Aorta (tissue), 5 donors: ENCODE measurements at regions of chr2 and their contacts with region 1.

Region 1: DNA sequence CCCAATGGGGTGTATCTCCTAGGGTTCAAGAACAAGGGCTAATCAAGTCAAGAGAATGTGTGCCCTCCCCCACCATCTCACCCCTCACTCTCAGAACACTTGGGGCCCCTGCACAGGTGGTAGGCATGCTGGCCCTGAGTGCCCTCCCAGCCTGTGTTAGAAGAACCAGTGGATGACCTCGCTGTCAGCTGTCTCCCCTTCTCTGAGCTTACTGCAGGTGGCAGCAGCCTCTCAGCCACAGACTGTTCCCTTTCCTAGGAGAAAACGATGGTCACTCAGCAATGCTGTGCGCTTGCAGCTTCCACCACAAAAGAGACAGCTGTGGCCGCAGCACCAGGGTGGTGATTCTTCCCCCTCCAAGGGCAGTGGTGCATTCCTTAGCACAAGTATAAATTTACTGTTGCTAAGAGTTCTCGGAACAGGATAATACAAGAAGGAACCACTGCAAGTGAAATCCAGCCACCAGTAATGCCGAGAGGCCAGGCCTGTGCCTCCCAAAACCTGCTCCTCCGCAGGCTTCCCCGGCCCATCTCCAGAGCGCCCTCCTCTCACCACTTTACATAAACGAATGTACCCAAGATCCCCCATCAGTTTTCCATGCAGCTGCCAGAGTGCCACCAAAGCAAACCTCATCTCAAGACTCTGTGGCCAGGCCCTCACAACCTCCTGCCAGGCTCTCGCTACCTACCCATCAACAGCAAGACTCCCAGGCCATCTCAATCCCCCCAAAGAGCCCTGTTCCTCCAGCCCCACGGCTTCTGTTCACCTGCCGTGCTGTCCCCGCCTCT is 935 bp upstream of the RAMP1 start:
- DNase-seq: peak; percentile 81 to 87
- ATAC-seq: peak; percentile 83
- H3K4me3 ChIP-seq: no peak overlapping the region
- H3K27ac ChIP-seq: peak overlapping the region in 1 of 2 donors; percentile 72
- H3K4me1 ChIP-seq: peaks cover 0 to 3% of the 10 kb centered on the region in 2 donors
- H3K27me3 ChIP-seq: no peaks in the 10 kb centered on the region

Region 2: DNA sequence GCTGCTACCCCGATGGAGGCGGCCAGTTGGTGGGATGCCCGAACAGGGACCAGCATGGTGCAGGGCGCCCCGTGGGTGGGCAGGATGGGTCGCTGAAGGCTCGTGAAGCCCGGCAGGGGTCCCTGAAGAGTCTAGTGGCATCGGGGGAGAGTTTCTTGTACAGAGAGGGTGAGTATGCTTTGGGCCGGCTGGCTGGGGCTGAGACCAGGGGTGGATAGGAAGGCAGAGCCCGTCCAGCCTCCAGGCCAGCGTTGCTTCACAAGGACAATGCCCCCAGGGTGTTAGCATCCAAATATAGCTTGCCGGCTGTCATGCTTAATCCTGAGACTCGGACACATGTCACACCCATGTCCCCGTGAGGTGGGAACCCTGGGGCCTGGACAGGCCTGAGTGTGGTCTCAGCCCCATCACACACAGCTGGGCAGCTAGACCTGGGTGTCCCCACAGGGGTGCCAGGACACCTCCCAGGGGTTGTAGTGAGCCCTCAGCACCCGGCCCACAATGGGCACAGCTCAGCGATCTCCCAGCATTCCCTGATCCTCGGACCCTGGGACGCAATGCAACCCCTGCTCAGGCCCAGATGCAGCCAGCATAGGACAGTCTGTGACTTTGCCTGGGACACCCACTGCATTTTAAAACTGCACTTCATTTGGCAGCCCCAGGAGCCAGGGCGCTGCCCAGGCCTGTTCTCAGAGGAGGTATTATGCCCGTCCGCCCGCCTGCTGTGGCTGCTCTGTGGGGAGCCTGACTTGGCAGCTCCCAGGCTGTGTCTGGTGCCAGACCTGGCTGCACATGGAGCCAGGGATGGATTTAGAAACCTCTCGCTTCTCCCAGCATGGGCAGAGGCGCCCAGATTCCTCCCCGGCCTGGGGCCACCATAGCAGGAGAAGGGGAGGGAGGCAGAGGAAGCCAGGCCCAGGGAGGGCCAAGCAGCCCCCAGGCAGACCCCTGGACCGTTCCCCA is 37.3 kb after region 1 on chr2:
- intact Hi-C with region 1: loop called in 1 of 2 experiments (anchors 5 kb)
- DNase-seq: peak; percentile 87 to 89
- ATAC-seq: peak; percentile 89
- H3K4me3 ChIP-seq: no peak overlapping the region
- H3K27ac ChIP-seq: peak overlapping the region; percentile 85 to 95
- H3K4me1 ChIP-seq: peaks cover 0 to 5% of the 10 kb centered on the region in 2 donors
- H3K27me3 ChIP-seq: no peaks in the 10 kb centered on the region

Region 3: DNA sequence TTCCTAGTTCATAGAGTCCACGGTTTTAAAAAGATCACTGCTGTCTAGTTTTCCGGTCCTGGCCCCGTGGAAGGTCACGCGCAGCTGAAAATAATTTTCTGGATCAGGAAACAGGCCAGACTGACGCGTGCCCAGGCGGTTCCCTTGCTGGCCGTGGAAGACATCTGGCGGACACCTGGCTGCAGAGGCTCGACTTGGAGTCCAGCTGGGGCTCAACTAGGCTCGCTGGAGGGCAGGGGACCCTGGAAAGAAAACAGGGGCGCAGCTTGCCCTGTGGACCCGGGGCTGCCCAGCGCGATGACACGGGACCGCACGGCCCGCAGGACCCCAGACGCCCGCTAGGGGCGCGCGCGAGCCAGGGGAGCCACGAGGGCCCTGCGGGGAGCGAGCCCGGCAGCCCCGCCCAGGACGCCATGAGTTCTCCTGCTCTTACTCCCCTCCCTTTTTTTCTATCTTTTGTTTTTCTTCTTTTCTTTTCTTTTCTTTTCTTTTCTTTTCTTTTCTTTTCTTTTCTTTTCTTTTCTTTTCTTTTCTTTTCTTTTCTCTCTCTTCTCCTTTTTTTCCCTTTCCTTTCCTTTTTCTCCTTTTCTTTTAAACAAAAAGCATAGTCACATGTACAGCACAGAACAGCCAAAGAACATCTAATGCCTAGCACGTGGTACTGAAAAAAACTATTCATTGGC is 65.1 kb after region 1 on chr2:
- intact Hi-C with region 1: loop called in 1 of 2 experiments (anchors 1 kb)
- DNase-seq: peak; percentile 89 to 93
- ATAC-seq: peak; percentile 95
- H3K4me3 ChIP-seq: no peak overlapping the region
- H3K27ac ChIP-seq: peak overlapping the region in 1 of 2 donors; percentile 86
- H3K4me1 ChIP-seq: no peaks in the 10 kb centered on the region
- H3K27me3 ChIP-seq: no peaks in the 10 kb centered on the region

Region 4: DNA sequence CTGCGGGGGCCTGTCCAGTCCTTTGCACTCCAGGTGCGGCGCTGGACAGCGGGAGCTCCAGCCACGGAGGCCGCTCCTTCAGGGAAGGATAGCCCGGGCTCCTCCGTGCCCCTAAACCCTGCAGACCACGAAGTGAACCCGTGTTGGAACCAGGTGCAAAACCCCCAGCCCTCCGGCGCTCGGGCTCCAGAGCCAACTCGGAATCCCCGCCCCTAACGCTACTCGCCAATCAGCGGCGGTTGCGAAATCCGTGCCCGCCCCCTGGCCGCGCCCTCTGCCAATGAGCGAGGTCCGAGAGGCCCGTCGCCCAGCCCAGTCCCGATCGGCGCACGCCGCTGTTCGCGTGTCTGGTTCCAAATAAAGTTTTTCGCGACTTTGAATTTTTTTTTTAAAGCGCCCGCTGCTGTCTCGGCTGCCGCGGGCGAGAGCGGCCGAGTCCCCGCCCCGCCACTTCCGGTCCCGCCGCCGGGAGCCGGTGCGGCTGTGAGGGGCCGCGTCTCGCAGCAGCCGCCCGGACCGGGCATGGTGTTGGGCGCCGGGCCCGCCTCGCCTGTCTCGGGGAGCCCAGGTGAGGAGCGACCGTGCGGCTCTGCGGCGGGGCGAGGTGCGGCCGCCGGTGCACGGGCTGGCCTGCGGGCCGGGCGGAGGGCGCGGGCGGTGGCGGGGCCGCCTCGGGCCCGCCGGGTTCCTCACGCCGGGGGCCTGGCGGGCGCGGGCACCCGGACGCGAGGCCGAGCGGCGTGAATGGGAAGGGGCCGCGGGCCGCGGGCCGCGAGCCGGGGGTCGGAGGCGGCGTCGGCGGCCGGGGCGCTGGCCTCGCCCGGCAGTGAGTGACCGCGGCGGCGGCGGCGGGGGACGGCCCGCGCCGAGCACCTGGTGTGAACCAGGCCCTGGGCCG is 108.3 kb after region 1 on chr2 and contains the start of gene UBE2F:
- intact Hi-C with region 1: loop called in 1 of 2 experiments (anchors 2 kb)
- DNase-seq: peak; percentile 99
- ATAC-seq: peak; percentile 98
- H3K4me3 ChIP-seq: peak within 1 kb of the TSS; percentile 94
- H3K27ac ChIP-seq: peak within 1 kb of the TSS in 1 of 2 donors; percentile 6
- H3K4me1 ChIP-seq: peaks cover 0 to 2% of the 10 kb centered on the region in 2 donors
- H3K27me3 ChIP-seq: no peaks in the 10 kb centered on the region
- total RNA-seq, gene UBE2F: 42.5 to 44.7 TPM

Region 5: DNA sequence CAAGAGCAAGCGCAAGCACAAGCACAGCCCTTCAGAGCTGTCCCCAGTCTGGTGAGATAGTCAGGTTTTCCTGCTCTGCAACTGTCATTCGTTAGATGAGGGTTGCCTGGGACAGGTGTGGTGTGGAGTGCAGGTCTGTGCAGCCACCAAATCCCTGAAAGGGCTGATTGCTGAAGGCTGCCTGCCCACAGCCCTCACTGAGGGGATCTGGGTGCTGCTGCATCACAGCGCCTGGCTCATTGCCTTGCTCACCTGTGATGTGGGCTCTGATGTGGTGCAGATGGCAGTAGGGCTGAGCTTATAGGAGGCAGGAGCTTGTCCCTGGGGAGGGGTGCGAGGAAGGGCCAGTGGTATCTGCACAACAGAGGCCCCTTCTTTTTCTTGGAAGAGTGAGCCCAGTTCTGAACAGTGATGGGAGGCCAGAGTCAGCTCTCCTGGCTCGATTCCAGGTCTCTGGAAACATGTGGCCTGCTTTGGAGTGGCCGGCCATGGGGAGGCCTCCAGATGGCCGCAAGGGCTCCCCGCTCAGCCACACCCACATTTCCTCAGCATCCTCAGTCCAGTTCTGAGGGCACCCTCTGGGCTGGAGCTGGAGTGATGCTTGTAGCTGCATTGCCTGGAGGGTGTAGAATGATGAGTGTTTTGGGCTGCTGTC is 119.7 kb after region 1 on chr2:
- intact Hi-C with region 1: no loop called
- DNase-seq: peak; percentile 59 to 61
- ATAC-seq: peak; percentile 17
- H3K4me3 ChIP-seq: no peak overlapping the region
- H3K27ac ChIP-seq: no peak overlapping the region
- H3K4me1 ChIP-seq: no peaks in the 10 kb centered on the region
- H3K27me3 ChIP-seq: no peaks in the 10 kb centered on the region

Region 6: GRCh38 chr2:238060542-238061314 is 202.2 kb after region 1 on chr2 and contains the start of gene SCLY:
- intact Hi-C with region 1: loop called in 1 of 2 experiments (anchors 2 kb)
- DNase-seq: peak; percentile 98 to 100
- ATAC-seq: peak; percentile 100
- H3K4me3 ChIP-seq: peak within 1 kb of the TSS; percentile 32 to 74
- H3K27ac ChIP-seq: peak within 1 kb of the TSS; percentile 49 to 92
- H3K4me1 ChIP-seq: no peaks in the 10 kb centered on the region
- H3K27me3 ChIP-seq: no peaks in the 10 kb centered on the region
- total RNA-seq, gene SCLY: 14.1 to 15.4 TPM

Region 7: GRCh38 chr2:238139196-238140039 is 280.9 kb after region 1 on chr2:
- intact Hi-C with region 1: loop called (anchors 2 to 10 kb)
- DNase-seq: no peak
- ATAC-seq: peak; percentile 3
- H3K4me3 ChIP-seq: peak overlapping the region; percentile 19 to 40
- H3K27ac ChIP-seq: no peak overlapping the region
- H3K4me1 ChIP-seq: no peaks in the 10 kb centered on the region
- H3K27me3 ChIP-seq: no peaks in the 10 kb centered on the region

Region 8: GRCh38 chr2:238263204-238264071 is 404.9 kb after region 1 on chr2:
- intact Hi-C with region 1: loop called (anchors 1 to 2 kb)
- DNase-seq: peak; percentile 95 to 97
- ATAC-seq: peak; percentile 89
- H3K4me3 ChIP-seq: no peak overlapping the region
- H3K27ac ChIP-seq: no peak overlapping the region
- H3K4me1 ChIP-seq: no peaks in the 10 kb centered on the region
- H3K27me3 ChIP-seq: no peaks in the 10 kb centered on the region